GM12878 (cell line): ENCODE measurements at regions of chr17 and their contacts with region 1.

Region 1: DNA sequence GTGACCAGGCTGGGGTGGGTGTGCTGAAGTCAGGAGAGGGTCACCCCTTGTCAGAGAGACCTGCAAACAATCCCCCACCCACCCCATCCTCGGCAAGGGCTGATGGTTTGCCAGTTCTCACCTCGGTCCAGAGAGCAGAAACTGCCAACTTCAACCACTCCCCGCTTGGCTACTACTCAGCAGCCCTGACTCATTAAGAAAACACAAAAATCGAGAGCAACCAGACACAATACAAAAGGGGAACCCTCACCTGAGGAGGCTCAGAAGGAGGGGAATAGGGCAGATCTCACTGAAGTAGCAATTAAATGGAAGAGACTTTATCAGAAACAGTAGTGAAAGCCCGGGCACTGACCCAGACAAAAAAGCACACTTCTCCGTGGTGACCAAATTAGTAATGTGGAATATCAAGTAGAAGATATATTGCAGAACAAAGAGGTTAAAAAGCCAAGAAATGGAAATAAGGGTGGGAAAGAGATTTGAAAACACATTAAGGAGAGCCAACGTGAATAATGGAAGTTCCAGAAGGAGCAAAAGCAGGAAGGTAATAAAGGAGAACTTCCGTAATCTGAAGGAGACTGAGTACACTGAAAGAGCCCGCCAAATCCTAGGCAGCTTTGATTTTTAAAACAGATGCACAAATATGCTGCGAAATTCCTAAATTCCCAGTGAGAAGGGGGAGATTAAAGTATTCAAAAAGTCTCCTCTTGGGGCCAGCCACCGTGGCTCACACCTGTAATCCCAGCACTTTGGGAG is 23.6 kb downstream of the CENPV start:
- DNase-seq: peak; percentile 28
- ATAC-seq: peak; percentile 98
- H3K4me3 ChIP-seq: no peak overlapping the region
- H3K27ac ChIP-seq: no peak overlapping the region
- H3K4me1 ChIP-seq: peaks cover 7% of the 10 kb centered on the region
- H3K27me3 ChIP-seq: no peaks in the 10 kb centered on the region
- CTCF ChIP-seq: no peak
- EP300 ChIP-seq: no peak
- POLR2A ChIP-seq: no peak
- RAD21 ChIP-seq: no peak

Region 2: GRCh38 chr17:15971098-15971678 is 358.5 kb before region 1 on chr17:
- CTCF ChIA-PET with region 1: no interaction called
- POLR2A ChIA-PET with region 1: no interaction called
- RAD21 ChIA-PET with region 1: no interaction called
- SMC1A ChIA-PET with region 1: no interaction called
- in situ Hi-C with region 1: no loop called
- intact Hi-C with region 1: no loop called
- DNase-seq: no peak
- ATAC-seq: no peak
- H3K4me3 ChIP-seq: no peak overlapping the region
- H3K27ac ChIP-seq: no peak overlapping the region
- H3K4me1 ChIP-seq: no peaks in the 10 kb centered on the region
- H3K27me3 ChIP-seq: peaks cover 0 to 5% of the 10 kb centered on the region in 2 experiments; a peak in 2 of 4 replicates
- CTCF ChIP-seq: no peak
- EP300 ChIP-seq: no peak
- POLR2A ChIP-seq: no peak
- RAD21 ChIP-seq: no peak

Region 3: DNA sequence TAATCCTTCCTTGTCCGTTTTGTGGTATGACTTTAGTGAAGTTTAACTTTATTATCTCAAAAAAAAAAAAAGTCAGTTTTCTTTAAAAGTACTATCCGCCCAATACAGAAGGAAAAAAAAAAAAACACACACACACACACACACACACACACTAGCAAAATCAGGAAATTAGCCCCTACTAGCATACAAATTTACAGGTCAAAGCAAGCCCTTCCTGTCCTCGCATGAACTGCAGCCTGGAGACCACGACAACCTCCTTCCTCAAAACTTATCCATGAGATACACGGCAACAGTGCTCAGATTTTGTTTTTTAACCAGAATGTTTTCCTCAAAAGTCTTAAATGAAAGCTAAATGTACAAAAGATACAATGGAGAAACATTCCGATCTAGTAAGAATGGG is 130.6 kb before region 1 on chr17:
- CTCF ChIA-PET with region 1: no interaction called
- POLR2A ChIA-PET with region 1: no interaction called
- RAD21 ChIA-PET with region 1: no interaction called
- SMC1A ChIA-PET with region 1: no interaction called
- in situ Hi-C with region 1: no loop called
- intact Hi-C with region 1: no loop called
- DNase-seq: no peak
- ATAC-seq: no peak
- H3K4me3 ChIP-seq: peak overlapping the region; percentile 33; the same call in 1 of the 2 replicates
- H3K27ac ChIP-seq: peak overlapping the region; percentile 58; the same call in 1 of the 2 replicates
- H3K4me1 ChIP-seq: peaks cover 3% of the 10 kb centered on the region
- H3K27me3 ChIP-seq: no peaks in the 10 kb centered on the region
- CTCF ChIP-seq: no peak
- EP300 ChIP-seq: no peak
- POLR2A ChIP-seq: no peak
- RAD21 ChIP-seq: no peak

Region 4: DNA sequence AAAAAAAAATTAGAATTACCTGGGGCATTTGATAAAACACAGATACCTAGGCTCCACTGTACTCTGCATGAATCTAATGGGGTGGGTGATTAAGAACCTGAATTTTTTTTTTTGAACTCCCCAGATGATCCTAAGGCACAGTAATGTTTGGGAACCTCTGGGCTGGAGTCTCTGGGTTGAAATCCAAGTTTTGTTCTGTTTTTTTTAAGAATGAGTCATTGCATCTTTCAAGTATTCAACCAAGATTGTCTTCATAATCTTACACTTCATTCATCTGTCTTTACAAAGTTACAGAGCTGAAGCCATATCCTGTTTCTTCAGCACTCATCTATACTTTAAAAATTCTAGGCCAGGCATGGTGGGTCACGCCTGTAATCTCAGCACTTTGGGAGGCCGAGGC is 60.0 kb before region 1 on chr17:
- CTCF ChIA-PET with region 1: no interaction called
- POLR2A ChIA-PET with region 1: interaction called, 3 read pairs
- RAD21 ChIA-PET with region 1: no interaction called
- SMC1A ChIA-PET with region 1: no interaction called
- in situ Hi-C with region 1: loop called (anchors 10 kb)
- intact Hi-C with region 1: no loop called
- DNase-seq: no peak
- ATAC-seq: no peak
- H3K4me3 ChIP-seq: no peak overlapping the region
- H3K27ac ChIP-seq: no peak overlapping the region
- H3K4me1 ChIP-seq: peaks cover 16% of the 10 kb centered on the region
- H3K27me3 ChIP-seq: no peaks in the 10 kb centered on the region
- CTCF ChIP-seq: no peak
- EP300 ChIP-seq: no peak
- POLR2A ChIP-seq: no peak
- RAD21 ChIP-seq: no peak

Region 5: GRCh38 chr17:16297367-16298139 is 32.1 kb before region 1 on chr17:
- CTCF ChIA-PET with region 1: no interaction called
- POLR2A ChIA-PET with region 1: interaction called, 11 read pairs
- RAD21 ChIA-PET with region 1: no interaction called
- SMC1A ChIA-PET with region 1: interaction called, 9 read pairs
- in situ Hi-C with region 1: no loop called
- intact Hi-C with region 1: no loop called
- DNase-seq: no peak
- ATAC-seq: no peak
- H3K4me3 ChIP-seq: no peak overlapping the region
- H3K27ac ChIP-seq: no peak overlapping the region
- H3K4me1 ChIP-seq: no peaks in the 10 kb centered on the region
- H3K27me3 ChIP-seq: no peaks in the 10 kb centered on the region
- CTCF ChIP-seq: no peak
- EP300 ChIP-seq: no peak
- POLR2A ChIP-seq: no peak
- RAD21 ChIP-seq: no peak

Region 6: DNA sequence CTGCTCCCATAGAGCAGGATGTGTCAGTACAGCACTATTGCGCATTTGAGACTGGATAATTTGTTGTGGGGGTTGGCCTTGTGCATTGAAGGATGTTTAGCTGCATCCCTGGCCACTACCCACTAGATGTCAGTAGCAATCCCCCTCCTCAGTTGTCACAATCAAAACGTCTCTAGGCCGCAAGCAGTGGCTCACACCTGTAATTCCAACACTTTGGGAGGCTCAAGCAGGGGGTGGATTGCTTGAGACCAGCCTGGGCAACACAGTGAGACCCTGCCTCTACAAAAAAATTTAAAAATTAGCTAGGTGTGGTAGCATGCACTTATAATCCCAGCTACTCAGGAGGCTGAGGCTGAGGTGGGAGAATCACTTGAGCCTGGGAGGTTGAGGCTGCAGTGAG is 24.9 kb before region 1 on chr17:
- CTCF ChIA-PET with region 1: interaction called, 11 read pairs
- POLR2A ChIA-PET with region 1: no interaction called
- RAD21 ChIA-PET with region 1: no interaction called
- SMC1A ChIA-PET with region 1: interaction called, 8 read pairs
- in situ Hi-C with region 1: no loop called
- intact Hi-C with region 1: no loop called
- DNase-seq: no peak
- ATAC-seq: peak; percentile 78
- H3K4me3 ChIP-seq: no peak overlapping the region
- H3K27ac ChIP-seq: no peak overlapping the region
- H3K4me1 ChIP-seq: no peaks in the 10 kb centered on the region
- H3K27me3 ChIP-seq: no peaks in the 10 kb centered on the region
- CTCF ChIP-seq: peak; percentile 46 to 61 (median 51)
- EP300 ChIP-seq: no peak
- POLR2A ChIP-seq: no peak
- RAD21 ChIP-seq: peak; percentile 45